Heart right ventricle (tissue), 16 donors: ENCODE measurements at regions of chrX and their contacts with region 1.

Region 1: GRCh38 chrX:50756276-50756675 is 57.7 kb downstream of the SHROOM4 start:
- DNase-seq: no peak
- ATAC-seq: no peak
- H3K4me3 ChIP-seq: no peak overlapping the region
- H3K27ac ChIP-seq: no peak overlapping the region
- H3K4me1 ChIP-seq: no peaks in the 10 kb centered on the region
- H3K27me3 ChIP-seq: peaks cover 0 to 20% (median 0%) of the 10 kb centered on the region in 7 donors
- CTCF ChIP-seq: no peak

Region 2: GRCh38 chrX:50770702-50771101 is 14.4 kb after region 1 on chrX:
- intact Hi-C with region 1: no loop called
- DNase-seq: peak in 1 of 2 donors; percentile 16
- ATAC-seq: peak in 7 of 8 donors; percentile 7 to 72 (median 49)
- H3K4me3 ChIP-seq: no peak overlapping the region
- H3K27ac ChIP-seq: peak overlapping the region in 1 of 10 donors; percentile 5
- H3K4me1 ChIP-seq: peaks cover 0 to 30% (median 10%) of the 10 kb centered on the region in 9 donors
- H3K27me3 ChIP-seq: peaks cover 0 to 42% (median 0%) of the 10 kb centered on the region in 7 donors
- CTCF ChIP-seq: no peak

Region 3: GRCh38 chrX:50801135-50801534 is 44.9 kb after region 1 on chrX:
- intact Hi-C with region 1: loop called in 1 of 10 experiments (anchors 10 kb)
- DNase-seq: no peak
- ATAC-seq: peak in 6 of 8 donors; percentile 52 to 82 (median 73)
- H3K4me3 ChIP-seq: no peak overlapping the region
- H3K27ac ChIP-seq: no peak overlapping the region
- H3K4me1 ChIP-seq: peaks cover 0 to 26% (median 0%) of the 10 kb centered on the region in 9 donors
- H3K27me3 ChIP-seq: peaks cover 0 to 19% (median 0%) of the 10 kb centered on the region in 7 donors
- CTCF ChIP-seq: no peak